CD14-positive monocyte (primary cell): ENCODE measurements at regions of chr9 and their contacts with region 1.

Region 1: DNA sequence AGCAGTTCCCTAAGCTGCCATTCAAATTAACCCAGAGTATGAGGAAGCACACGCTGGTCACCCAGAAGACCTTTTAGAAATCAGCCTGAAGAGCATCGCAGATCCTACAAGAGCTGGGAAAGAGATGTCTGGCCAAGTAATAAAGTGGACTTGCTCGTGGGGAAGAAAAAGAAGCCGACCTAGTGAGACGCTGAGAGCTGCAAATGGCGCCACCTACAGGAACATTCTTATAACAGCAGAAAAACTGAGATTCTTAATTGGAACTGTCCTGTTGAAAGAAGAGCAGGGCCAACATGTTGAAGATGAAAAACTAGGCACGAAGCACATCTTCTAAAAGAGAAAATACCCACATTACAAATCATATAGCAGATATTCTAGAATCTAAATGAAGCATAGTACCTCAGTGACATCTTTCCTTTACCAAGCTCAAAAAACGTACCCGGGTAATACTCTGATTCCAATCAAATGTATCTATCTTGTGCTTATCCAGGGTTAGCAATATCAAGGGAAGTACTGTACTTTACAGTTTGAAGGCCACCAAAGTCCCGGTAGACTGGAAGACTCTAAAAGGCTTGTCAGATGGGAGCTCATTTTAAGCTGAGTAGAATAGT is 3.9 kb upstream of the GNAQ start:
- DNase-seq: peak; percentile 66 to 80 (median 75)
- H3K4me3 ChIP-seq: peak overlapping the region in 1 of 3 experiments; percentile 11
- H3K4me3 Mint-ChIP-seq: peak overlapping the region in 1 of 2 donors; percentile 76
- H3K27ac ChIP-seq: no peak overlapping the region
- H3K27ac Mint-ChIP-seq: peak overlapping the region in 2 of 7 donors; percentile 46 to 55
- H3K4me1 ChIP-seq: peaks cover 29 to 38% of the 10 kb centered on the region in 2 donors
- H3K4me1 Mint-ChIP-seq: peaks cover 43% of the 10 kb centered on the region
- H3K27me3 ChIP-seq: no peaks in the 10 kb centered on the region
- H3K27me3 Mint-ChIP-seq: no peaks in the 10 kb centered on the region
- CTCF ChIP-seq: peak; percentile 82

Region 2: GRCh38 chr9:77935974-77936373 is 99.5 kb before region 1 on chr9:
- intact Hi-C with region 1: loop called (anchors 5 to 10 kb)
- DNase-seq: peak; percentile 72 to 85 (median 83)
- H3K4me3 ChIP-seq: peak overlapping the region in 2 of 3 experiments; percentile 22 to 63
- H3K4me3 Mint-ChIP-seq: peak overlapping the region in 1 of 2 donors; percentile 71
- H3K27ac ChIP-seq: peak overlapping the region in 1 of 2 donors; percentile 80
- H3K27ac Mint-ChIP-seq: peak overlapping the region; percentile 89 to 95 (median 94)
- H3K4me1 ChIP-seq: peaks cover 41 to 43% of the 10 kb centered on the region in 2 donors
- H3K4me1 Mint-ChIP-seq: peaks cover 53% of the 10 kb centered on the region
- H3K27me3 ChIP-seq: no peaks in the 10 kb centered on the region
- H3K27me3 Mint-ChIP-seq: peaks cover 0 to 1% (median 0%) of the 10 kb centered on the region in 3 donors
- CTCF ChIP-seq: no peak

Region 3: GRCh38 chr9:77944556-77945243 is 90.8 kb before region 1 on chr9:
- intact Hi-C with region 1: loop called (anchors 5 to 10 kb)
- DNase-seq: peak; percentile 46 to 81 (median 81)
- H3K4me3 ChIP-seq: peak overlapping the region in 2 of 3 experiments; percentile 39 to 71
- H3K4me3 Mint-ChIP-seq: peak overlapping the region; percentile 58 to 96
- H3K27ac ChIP-seq: peak overlapping the region; percentile 57 to 84
- H3K27ac Mint-ChIP-seq: peak overlapping the region; percentile 90 to 96 (median 92)
- H3K4me1 ChIP-seq: peaks cover 61 to 75% of the 10 kb centered on the region in 2 donors
- H3K4me1 Mint-ChIP-seq: peaks cover 76% of the 10 kb centered on the region
- H3K27me3 ChIP-seq: no peaks in the 10 kb centered on the region
- H3K27me3 Mint-ChIP-seq: no peaks in the 10 kb centered on the region
- CTCF ChIP-seq: no peak

Region 4: DNA sequence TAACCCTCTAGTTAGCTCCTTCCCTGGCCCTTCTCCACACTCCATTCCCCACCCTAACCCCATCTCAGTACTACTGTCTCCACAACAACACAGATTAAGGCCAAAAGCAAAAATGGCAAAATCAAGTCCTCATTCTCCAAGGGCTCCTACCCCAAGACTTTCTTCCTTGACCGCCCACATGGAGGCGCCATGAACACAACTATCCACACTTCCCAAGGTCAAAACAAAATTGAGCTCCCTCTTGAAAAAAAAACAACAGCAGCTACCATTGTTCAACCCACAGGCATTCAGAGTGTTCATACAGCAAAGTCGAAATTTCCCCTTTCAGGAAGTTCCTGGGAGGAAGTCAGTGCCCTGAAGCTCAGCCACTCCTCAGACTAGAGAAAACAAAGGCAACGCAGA is 58.3 kb before region 1 on chr9:
- intact Hi-C with region 1: loop called (anchors 5 kb)
- DNase-seq: peak; percentile 70 to 86 (median 77)
- H3K4me3 ChIP-seq: peak overlapping the region in 1 of 3 experiments; percentile 49
- H3K4me3 Mint-ChIP-seq: peak overlapping the region; percentile 2 to 37
- H3K27ac ChIP-seq: peak overlapping the region; percentile 49 to 71
- H3K27ac Mint-ChIP-seq: peak overlapping the region; percentile 28 to 87 (median 80)
- H3K4me1 ChIP-seq: peaks cover 44 to 50% of the 10 kb centered on the region in 2 donors
- H3K4me1 Mint-ChIP-seq: peaks cover 56% of the 10 kb centered on the region
- H3K27me3 ChIP-seq: no peaks in the 10 kb centered on the region
- H3K27me3 Mint-ChIP-seq: no peaks in the 10 kb centered on the region
- CTCF ChIP-seq: peak; percentile 34

Region 5: DNA sequence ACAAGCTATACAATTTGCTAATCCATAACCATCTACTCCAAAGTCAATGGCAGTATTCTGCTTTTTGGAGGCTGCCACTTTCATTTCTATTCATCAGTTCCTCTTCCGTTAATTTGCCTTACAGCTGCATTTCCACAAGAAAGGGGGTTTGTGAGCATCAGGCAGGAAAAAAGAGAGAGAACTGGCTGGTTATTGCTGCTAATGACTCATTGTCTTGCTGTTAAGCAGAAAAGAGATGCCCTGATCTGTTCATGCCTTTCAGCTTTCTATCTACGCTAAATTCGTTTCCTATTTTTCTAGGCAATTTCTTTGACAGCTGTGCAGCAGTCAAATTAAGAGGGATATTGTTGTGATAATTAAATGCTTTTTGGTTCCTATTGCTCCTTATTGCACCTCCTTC is 62.1 kb after region 1 on chr9:
- intact Hi-C with region 1: loop called (anchors 5 to 10 kb)
- DNase-seq: peak; percentile 80 to 86 (median 83)
- H3K4me3 ChIP-seq: peak overlapping the region; percentile 12 to 68 (median 49)
- H3K4me3 Mint-ChIP-seq: peak overlapping the region in 1 of 2 donors; percentile 78
- H3K27ac ChIP-seq: peak overlapping the region in 1 of 2 donors; percentile 88
- H3K27ac Mint-ChIP-seq: peak overlapping the region; percentile 74 to 93 (median 85)
- H3K4me1 ChIP-seq: peaks cover 25 to 38% of the 10 kb centered on the region in 2 donors
- H3K4me1 Mint-ChIP-seq: peaks cover 43% of the 10 kb centered on the region
- H3K27me3 ChIP-seq: no peaks in the 10 kb centered on the region
- H3K27me3 Mint-ChIP-seq: no peaks in the 10 kb centered on the region
- CTCF ChIP-seq: no peak

Region 6: GRCh38 chr9:78121488-78121887 is 86.0 kb after region 1 on chr9:
- intact Hi-C with region 1: loop called in 1 of 2 experiments (anchors 5 kb)
- DNase-seq: peak; percentile 67 to 86 (median 76)
- H3K4me3 ChIP-seq: no peak overlapping the region
- H3K4me3 Mint-ChIP-seq: no peak overlapping the region
- H3K27ac ChIP-seq: no peak overlapping the region
- H3K27ac Mint-ChIP-seq: peak overlapping the region in 3 of 7 donors; percentile 12 to 66 (median 61)
- H3K4me1 ChIP-seq: peaks cover 28 to 31% of the 10 kb centered on the region in 2 donors
- H3K4me1 Mint-ChIP-seq: peaks cover 34% of the 10 kb centered on the region
- H3K27me3 ChIP-seq: no peaks in the 10 kb centered on the region
- H3K27me3 Mint-ChIP-seq: no peaks in the 10 kb centered on the region
- CTCF ChIP-seq: peak; percentile 82